ENCODE measurements at regions of chr1 and their contacts with region 1.

Region 1: GRCh38 chr1:51192213-51192843 is 43.7 kb upstream of the RNF11 start:
- DNase-seq: peak; percentile 74 to 83
- ATAC-seq: no peak
- H3K4me3 ChIP-seq: no peak overlapping the region
- H3K27ac ChIP-seq: no peak overlapping the region
- H3K4me1 ChIP-seq: no peaks in the 10 kb centered on the region
- H3K27me3 ChIP-seq: no peaks in the 10 kb centered on the region

Region 2: DNA sequence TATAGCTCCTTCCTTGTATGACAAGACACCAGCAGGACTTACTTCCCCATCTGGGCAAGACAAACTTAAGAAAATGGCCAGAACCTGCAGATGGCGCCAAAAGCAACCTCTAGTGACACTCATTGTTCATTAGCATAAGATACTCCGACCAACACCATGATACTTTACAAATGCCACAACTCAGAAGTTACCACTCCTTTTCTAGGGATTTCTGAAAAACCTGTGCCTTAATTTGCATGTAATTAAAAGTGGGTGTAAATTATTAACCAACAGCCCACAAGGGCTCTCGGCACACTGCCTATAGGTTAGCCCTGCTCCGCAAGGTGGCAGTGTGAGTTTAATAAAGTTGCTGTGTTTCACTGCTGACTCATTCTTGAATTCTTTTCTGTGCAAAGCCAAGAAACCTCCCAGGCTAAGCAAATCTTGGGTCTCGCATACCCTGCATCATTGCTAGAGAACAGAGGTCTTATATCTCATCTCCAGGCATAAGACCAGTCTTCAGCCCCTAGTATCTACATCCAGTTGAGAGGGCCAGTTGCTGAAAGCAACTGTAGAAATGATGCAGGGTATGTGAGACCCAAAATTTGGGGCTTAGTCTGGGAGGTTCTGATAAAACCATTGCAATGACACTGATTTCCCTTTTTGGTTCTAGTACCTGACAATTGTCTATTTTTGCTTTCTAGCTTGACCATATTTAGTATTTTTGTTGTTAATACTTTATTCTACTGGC is 318.7 kb before region 1 on chr1:
- intact Hi-C with region 1: loop called in 1 of 2 experiments (anchors 5 kb)
- DNase-seq: peak in 1 of 2 donors; percentile 77
- ATAC-seq: no peak
- H3K4me3 ChIP-seq: no peak overlapping the region
- H3K27ac ChIP-seq: no peak overlapping the region
- H3K4me1 ChIP-seq: no peaks in the 10 kb centered on the region
- H3K27me3 ChIP-seq: no peaks in the 10 kb centered on the region

Region 3: DNA sequence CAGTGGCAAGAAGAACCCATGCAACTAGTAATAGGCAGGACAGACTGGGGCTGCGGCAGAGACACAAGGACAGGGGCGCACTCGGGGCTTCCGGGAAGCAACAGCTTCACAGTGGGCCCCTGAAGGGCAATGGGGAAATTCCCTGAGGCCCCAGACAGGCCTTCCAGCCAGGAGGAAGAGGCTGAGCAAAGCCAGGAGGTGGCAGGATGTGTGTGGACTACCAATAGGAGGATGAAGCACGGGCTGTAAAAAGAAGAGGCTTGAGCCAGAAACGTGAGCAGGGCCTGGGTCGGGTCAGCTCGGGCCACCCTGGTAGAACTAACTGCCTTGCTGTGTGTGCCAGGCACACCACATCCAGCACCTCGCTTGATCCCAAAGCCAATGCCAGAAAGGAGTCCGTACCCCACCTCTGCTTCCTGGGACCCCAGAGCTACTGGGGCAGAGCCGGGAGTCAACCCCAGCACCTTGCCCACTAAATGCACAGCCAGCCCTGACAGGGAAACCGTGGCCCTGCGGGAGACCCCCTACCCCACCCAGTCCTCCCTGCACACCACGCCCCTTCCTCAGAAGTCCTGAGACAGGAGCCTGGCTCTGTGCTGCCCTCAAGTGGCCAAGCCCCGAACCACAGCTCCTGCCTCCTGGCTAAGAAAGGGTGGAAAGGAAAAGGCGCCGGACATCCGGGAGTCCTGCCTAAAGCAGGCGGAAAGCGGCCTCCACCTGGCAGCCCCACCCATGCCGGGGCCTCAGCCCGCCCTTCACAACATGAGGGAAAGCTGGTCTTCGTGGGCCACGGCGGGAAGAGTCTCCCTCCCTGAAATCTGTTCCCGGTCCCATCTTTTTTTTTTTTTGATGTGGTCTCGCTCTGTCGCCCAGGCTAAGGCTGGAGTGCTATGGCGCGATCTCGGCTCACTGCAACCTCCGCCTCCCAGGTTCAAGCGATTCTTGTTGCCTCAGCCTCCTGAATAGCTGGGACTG is 104.3 kb after region 1 on chr1:
- intact Hi-C with region 1: loop called (anchors 2 to 5 kb)
- DNase-seq: peak; percentile 87 to 95
- ATAC-seq: peak; percentile 91
- H3K4me3 ChIP-seq: peak overlapping the region; percentile 14 to 63
- H3K27ac ChIP-seq: no peak overlapping the region
- H3K4me1 ChIP-seq: no peaks in the 10 kb centered on the region
- H3K27me3 ChIP-seq: no peaks in the 10 kb centered on the region